ENCODE measurements at regions of chr12 and their contacts with region 1.

Region 1: DNA sequence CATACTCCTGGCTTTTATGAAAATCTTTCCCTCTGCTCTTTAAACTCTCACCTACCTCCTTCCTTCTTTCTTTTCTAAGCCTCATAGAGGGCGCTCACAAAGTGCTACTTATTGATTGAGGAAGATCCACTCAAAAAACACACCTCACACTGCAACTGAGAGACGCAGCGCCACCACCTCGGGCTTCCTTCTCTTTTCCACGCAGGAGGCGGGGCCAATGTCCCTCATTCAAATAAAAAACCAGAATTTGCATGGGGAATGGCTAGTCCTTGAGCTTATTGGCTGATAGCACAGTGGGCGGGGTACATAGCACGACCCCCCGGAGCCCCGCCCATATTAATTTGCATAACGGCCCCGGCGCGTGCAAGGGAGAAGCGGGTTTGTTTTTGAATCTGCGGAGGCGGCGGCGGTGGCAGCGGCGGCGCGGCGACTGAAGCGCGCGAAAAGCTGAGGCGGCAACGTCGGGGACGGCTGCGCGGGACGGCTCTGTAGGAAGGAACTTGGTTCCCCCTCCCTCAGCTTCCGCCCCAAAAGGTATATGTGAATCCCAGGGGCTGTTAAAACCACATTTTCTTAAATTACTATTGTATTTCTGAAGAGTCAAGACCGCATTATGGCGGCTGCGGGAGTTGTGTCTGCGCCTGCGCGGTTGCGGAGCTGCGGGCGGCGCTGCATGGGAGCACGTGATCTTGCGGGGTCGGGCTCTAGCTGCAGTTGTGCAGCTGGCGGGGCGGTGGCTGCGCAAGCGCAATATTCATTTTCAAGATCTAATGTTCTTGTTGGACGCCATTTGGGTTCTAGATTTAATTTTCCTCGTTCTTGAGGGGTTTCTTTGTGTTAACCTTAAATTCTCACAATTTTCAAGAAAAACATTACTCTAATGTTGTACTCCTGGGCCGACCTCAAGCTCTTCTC is at the start of gene ATF7IP:
- DNase-seq: peak; percentile 97
- H3K4me3 Mint-ChIP-seq: peak within 1 kb of the TSS; percentile 76
- H3K27ac Mint-ChIP-seq: peak within 1 kb of the TSS; percentile 91
- H3K4me1 Mint-ChIP-seq: peaks cover 41% of the 10 kb centered on the region
- H3K27me3 Mint-ChIP-seq: peaks cover 1% of the 10 kb centered on the region
- total RNA-seq, gene ATF7IP: 93.0 to 94.1 TPM

Region 2: DNA sequence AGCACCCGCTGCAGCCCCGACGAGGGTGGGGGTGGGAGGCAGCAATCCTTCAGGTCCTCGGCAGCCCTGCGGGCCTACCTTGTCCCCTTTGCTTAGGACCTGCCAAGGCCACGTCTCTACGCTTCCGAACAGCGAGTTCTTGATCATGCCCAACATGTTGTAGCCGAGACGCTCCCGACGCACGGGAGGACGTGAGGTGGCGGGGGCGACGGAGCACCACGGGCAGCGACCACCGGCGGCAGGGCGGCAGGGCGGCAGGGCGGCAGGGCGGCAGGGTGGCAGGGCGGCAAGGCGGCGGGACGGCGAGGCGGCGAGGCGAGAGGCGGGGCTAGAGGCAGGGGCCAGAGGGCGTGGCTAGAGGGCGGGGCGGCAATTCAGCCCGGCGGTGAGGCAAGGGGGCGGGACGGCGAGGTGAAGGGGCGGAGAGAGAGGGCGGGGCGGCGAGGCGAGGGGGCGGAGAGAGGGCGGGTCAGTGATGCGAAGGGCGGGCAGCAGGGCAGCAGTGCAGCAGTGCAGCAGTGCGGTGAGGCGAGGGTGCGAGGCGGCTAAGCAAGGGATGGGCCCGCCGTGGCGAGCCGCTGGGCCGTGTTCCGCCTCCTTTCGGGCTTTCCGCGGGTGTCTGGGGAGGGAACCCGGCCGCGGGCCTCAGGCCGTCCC is 1365.5 kb before region 1 on chr12 and contains the start of gene HEBP1:
- CTCF ChIA-PET with region 1: no interaction called
- POLR2A ChIA-PET with region 1: no interaction called
- intact Hi-C with region 1: loop called (anchors 5 kb)
- DNase-seq: peak; percentile 97
- H3K4me3 Mint-ChIP-seq: peak within 1 kb of the TSS; percentile 82
- H3K27ac Mint-ChIP-seq: peak within 1 kb of the TSS; percentile 53
- H3K4me1 Mint-ChIP-seq: peaks cover 25% of the 10 kb centered on the region
- H3K27me3 Mint-ChIP-seq: peaks cover 6% of the 10 kb centered on the region
- total RNA-seq, gene HEBP1: 20.5 to 22.4 TPM

Region 3: DNA sequence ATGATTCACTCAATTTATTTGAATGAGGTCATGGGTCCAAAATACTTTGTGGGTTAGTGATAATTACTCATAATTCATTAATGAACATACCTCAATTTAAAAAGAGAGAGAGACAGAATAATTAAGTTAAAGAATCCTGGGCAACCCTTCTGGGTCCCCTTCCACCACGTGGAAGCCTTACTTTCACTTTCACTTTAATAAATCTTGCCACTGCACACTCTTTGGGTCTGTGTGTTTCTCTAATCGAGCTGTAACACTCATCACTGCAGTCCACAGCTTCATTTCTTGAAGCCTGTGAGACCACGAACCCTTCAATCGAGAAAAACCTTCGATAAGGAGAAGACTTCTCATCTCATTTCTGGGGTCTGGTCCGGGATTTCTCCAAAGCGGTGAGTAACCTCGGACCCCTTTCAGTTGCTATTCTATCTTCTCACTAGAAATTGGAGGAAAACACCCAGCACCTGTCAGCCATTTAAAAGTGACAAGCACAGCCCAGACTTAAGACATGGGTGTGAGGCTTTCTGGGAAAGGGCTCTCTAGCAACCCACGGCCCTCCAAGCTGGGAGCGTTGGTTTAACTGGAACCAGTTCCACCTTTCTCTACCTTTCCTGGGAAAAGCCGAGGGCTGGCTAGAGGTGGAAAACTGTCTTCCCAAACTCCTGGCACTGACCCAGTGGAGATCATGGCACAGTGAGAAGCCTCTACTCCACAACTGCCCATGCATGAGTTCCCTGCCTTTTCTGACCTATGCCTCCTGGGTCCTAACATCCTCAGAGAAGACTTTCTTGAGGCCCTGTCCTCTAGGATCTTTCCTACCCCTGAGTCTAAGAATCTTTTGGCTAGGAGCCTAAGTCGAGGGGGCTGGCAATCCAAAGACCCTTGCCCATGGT is 148.9 kb before region 1 on chr12:
- CTCF ChIA-PET with region 1: interaction called, 4 read pairs
- POLR2A ChIA-PET with region 1: interaction called, 5 read pairs
- intact Hi-C with region 1: loop called (anchors 1 kb)
- DNase-seq: no peak
- H3K4me3 Mint-ChIP-seq: peak overlapping the region; percentile 44
- H3K27ac Mint-ChIP-seq: peak overlapping the region; percentile 42
- H3K4me1 Mint-ChIP-seq: peaks cover 35% of the 10 kb centered on the region
- H3K27me3 Mint-ChIP-seq: no peaks in the 10 kb centered on the region

Region 4: GRCh38 chr12:14257734-14258574 is 107.6 kb before region 1 on chr12:
- CTCF ChIA-PET with region 1: interaction called, 26 read pairs
- POLR2A ChIA-PET with region 1: interaction called, 21 read pairs
- intact Hi-C with region 1: loop called (anchors 1 kb)
- DNase-seq: peak; percentile 97
- H3K4me3 Mint-ChIP-seq: peak overlapping the region; percentile 67
- H3K27ac Mint-ChIP-seq: peak overlapping the region; percentile 99
- H3K4me1 Mint-ChIP-seq: peaks cover 45% of the 10 kb centered on the region
- H3K27me3 Mint-ChIP-seq: no peaks in the 10 kb centered on the region

Region 5: GRCh38 chr12:14394317-14395073 is 28.9 kb after region 1 on chr12:
- CTCF ChIA-PET with region 1: interaction called, 16 read pairs
- POLR2A ChIA-PET with region 1: interaction called, 20 read pairs
- intact Hi-C with region 1: loop called (anchors 1 kb)
- DNase-seq: peak; percentile 53
- H3K4me3 Mint-ChIP-seq: peak overlapping the region; percentile 74
- H3K27ac Mint-ChIP-seq: peak overlapping the region; percentile 93
- H3K4me1 Mint-ChIP-seq: peaks cover 79% of the 10 kb centered on the region
- H3K27me3 Mint-ChIP-seq: no peaks in the 10 kb centered on the region

Region 6: DNA sequence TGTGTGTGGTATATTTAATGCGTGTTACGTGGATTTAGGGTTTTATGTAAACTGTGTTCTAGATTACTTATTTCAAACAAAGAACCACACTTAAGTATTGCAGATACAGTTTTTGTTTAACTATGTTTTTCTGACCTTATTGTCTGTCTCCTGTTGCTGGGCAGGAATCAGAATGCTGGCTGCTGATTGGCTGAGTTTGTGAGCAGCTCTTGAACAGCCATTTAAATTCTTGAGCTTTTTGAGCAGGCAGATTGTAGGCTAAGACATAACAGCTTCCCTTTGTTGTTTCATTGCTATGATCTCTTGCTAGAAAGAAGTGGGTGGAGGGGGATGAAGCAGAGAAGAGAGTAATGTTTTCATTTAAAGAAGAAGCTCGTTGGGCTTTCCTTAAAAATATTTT is 52.2 kb after region 1 on chr12:
- CTCF ChIA-PET with region 1: interaction called, 28 read pairs
- POLR2A ChIA-PET with region 1: interaction called, 11 read pairs
- intact Hi-C with region 1: loop called (anchors 1 kb)
- DNase-seq: peak; percentile 85
- H3K4me3 Mint-ChIP-seq: peak overlapping the region; percentile 69
- H3K27ac Mint-ChIP-seq: peak overlapping the region; percentile 94
- H3K4me1 Mint-ChIP-seq: peaks cover 63% of the 10 kb centered on the region
- H3K27me3 Mint-ChIP-seq: no peaks in the 10 kb centered on the region

Region 7: GRCh38 chr12:14479004-14479403 is 113.5 kb after region 1 on chr12:
- CTCF ChIA-PET with region 1: no interaction called
- POLR2A ChIA-PET with region 1: no interaction called
- intact Hi-C with region 1: loop called (anchors 1 kb)
- DNase-seq: no peak
- H3K4me3 Mint-ChIP-seq: no peak overlapping the region
- H3K27ac Mint-ChIP-seq: peak overlapping the region; percentile 67
- H3K4me1 Mint-ChIP-seq: peaks cover 22% of the 10 kb centered on the region
- H3K27me3 Mint-ChIP-seq: no peaks in the 10 kb centered on the region

Region 8: DNA sequence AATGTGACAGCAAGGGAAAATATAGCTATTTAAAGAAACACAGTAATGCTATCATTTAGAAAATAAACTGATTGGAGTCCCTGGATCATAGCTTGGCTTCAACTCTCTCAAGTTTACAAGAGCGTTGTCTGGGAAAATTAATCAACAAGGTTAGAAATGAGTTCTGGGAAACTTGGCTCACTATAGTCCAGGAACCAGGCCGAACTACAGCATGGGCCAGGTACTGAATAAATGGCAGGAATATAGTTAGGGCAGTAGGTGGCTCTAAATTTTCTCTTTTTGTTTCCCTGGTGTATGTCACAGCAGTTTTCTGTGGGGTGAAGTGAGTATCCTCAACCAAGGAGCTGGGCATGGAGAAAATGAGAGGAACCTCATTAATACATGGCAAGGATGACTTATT is 129.8 kb after region 1 on chr12:
- CTCF ChIA-PET with region 1: no interaction called
- POLR2A ChIA-PET with region 1: no interaction called
- intact Hi-C with region 1: no loop called
- DNase-seq: no peak
- H3K4me3 Mint-ChIP-seq: no peak overlapping the region
- H3K27ac Mint-ChIP-seq: peak overlapping the region; percentile 21
- H3K4me1 Mint-ChIP-seq: peaks cover 7% of the 10 kb centered on the region
- H3K27me3 Mint-ChIP-seq: no peaks in the 10 kb centered on the region